ENCODE measurements at regions of chr5 and their contacts with region 1.

Region 1: DNA sequence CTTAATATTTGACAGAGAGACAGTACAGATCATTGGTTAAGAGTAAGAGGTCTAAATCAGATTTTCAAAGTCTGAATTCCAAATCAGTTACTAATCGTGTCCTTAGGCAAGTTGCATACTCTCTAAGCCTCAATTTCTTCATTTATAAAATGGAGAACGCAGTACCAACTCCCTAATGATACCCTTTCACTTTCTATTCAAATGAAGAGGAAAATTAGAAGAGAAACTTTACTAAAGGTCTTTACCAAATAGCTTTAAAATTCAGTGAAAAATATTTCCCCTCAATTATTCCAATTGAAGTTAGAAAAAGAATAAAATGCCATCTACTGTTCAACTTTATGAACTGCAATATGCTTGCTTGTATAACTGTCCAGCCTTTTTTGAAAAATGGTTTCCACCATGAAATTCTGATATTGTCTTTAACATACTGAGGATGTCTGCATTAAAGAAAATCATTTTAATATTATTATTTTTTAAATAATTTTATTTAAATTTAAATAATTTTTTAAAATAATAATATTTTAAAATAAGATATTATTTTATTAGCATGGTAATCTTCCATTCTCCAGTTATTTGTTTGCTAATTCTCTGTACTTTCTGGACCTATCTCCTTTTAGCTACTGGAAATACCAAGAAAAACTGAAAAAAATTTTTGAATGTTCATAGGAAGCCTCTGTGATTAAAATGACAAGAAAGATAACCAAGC is 36.0 kb downstream of the POC5 start:
- DNase-seq: no peak
- ATAC-seq: no peak
- H3K4me3 ChIP-seq: no peak overlapping the region
- H3K27ac ChIP-seq: no peak overlapping the region
- H3K4me1 ChIP-seq: no peaks in the 10 kb centered on the region
- H3K27me3 ChIP-seq: no peaks in the 10 kb centered on the region

Region 2: GRCh38 chr5:75236322-75237316 is 444.7 kb before region 1 on chr5 and contains the start of gene ANKRD31:
- intact Hi-C with region 1: loop called (anchors 5 kb)
- DNase-seq: peak; percentile 91 to 95
- ATAC-seq: peak; percentile 100
- H3K4me3 ChIP-seq: peak within 1 kb of the TSS; percentile 50 to 98
- H3K27ac ChIP-seq: peak within 1 kb of the TSS in 1 of 2 donors; percentile 82
- H3K4me1 ChIP-seq: no peaks in the 10 kb centered on the region
- H3K27me3 ChIP-seq: no peaks in the 10 kb centered on the region
- total RNA-seq, gene ANKRD31: 0.16 to 0.24 TPM

Region 3: GRCh38 chr5:75524071-75524470 is 157.2 kb before region 1 on chr5:
- intact Hi-C with region 1: loop called in 1 of 2 experiments (anchors 10 kb)
- DNase-seq: no peak
- ATAC-seq: no peak
- H3K4me3 ChIP-seq: no peak overlapping the region
- H3K27ac ChIP-seq: no peak overlapping the region
- H3K4me1 ChIP-seq: peaks cover 0 to 2% of the 10 kb centered on the region in 2 donors
- H3K27me3 ChIP-seq: no peaks in the 10 kb centered on the region

Measured in aorta (tissue), 5 donors.